IMR-90 (cell line): ENCODE measurements at regions of chr7 and their contacts with region 1.

Region 1: DNA sequence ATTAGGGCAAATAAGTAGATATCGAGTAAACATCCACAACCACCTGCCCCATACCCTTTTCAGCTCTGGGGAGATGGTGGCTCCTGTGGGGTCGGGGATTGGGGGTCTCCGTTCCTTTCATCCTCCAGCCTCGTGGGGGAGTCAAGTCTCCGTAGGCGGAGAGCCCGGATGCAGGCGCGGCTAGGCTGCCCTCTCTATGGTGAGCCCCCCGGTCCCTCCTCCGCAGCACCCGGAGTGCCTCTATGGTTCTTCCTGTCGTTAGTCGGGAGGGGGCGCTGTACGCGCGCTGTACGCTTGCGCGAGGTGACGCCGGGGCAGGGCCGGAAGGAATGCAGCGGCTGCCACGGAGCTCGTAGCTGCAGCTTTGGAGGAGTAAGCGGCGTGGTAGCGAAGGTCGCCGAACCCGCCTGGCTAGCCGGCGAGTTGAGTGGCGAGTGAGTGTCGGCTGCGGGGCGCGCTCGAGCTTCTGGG is 14.8 kb upstream of the MMD2 start:
- DNase-seq: peak; percentile 89
- ATAC-seq: peak; percentile 98
- H3K4me3 ChIP-seq: peak overlapping the region; percentile 73
- H3K27ac ChIP-seq: peak overlapping the region; percentile 81
- H3K4me1 ChIP-seq: no peaks in the 10 kb centered on the region
- H3K27me3 ChIP-seq: no peaks in the 10 kb centered on the region; the same call in 1 of the 2 replicates
- CTCF ChIP-seq: peak; percentile 92
- POLR2A ChIP-seq: peak; percentile 75
- RAD21 ChIP-seq: peak; percentile 47

Region 2: DNA sequence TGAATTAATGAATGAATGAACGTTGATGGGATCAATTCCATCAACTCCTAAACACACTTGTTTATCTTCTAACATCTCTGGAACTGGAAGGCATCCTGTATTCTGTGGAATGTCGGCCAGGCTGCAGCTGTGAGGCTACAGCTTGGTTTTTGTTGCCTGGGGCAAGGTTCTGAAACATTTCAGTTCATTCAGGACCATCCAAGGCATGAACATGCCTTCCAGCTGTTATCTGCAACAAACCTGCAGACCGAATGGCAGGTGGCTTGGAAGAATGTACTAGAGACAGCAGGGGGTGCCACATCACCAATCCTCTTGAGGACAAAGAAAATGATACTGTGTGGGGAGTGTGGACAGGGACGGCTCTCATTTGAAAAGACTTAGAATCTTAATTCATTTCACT is 124.4 kb before region 1 on chr7:
- CTCF ChIA-PET with region 1: interaction called, 3 read pairs
- POLR2A ChIA-PET with region 1: no interaction called
- dilution Hi-C with region 1: no loop called
- in situ Hi-C with region 1: no loop called
- intact Hi-C with region 1: loop called (anchors 5 kb)
- DNase-seq: peak; percentile 26
- ATAC-seq: peak; percentile 42
- H3K4me3 ChIP-seq: no peak overlapping the region
- H3K27ac ChIP-seq: no peak overlapping the region
- H3K4me1 ChIP-seq: peaks cover 2% of the 10 kb centered on the region; the same call in 1 of the 2 replicates
- H3K27me3 ChIP-seq: no peaks in the 10 kb centered on the region; the same call in 1 of the 2 replicates
- CTCF ChIP-seq: peak; percentile 24; the same call in 1 of the 2 replicates
- POLR2A ChIP-seq: no peak
- RAD21 ChIP-seq: peak; percentile 29

Region 3: DNA sequence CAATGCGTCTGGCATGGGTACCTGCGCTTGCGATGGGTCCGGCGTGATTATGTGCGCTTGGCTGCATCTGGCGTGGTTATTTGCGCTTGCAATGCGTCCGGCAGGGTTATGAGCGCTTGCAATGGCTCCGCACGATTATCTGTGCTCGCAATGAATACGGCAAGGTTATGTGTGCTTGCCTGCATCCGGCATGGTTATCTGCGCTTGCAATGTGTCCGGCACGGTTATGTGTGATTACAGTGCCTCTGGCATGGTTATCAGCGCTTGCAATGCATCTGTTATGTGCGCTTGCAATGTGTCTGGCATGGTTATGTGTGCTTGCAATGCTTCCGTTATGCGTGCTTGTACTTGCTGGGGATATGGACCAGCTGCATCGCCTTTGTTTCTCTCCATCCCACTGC is 109.5 kb after region 1 on chr7:
- CTCF ChIA-PET with region 1: no interaction called
- POLR2A ChIA-PET with region 1: no interaction called
- dilution Hi-C with region 1: no loop called
- in situ Hi-C with region 1: no loop called
- intact Hi-C with region 1: loop called (anchors 1 kb)
- DNase-seq: no peak
- ATAC-seq: no peak
- H3K4me3 ChIP-seq: no peak overlapping the region
- H3K27ac ChIP-seq: no peak overlapping the region
- H3K4me1 ChIP-seq: no peaks in the 10 kb centered on the region
- H3K27me3 ChIP-seq: peaks cover 7% of the 10 kb centered on the region; the same call in 1 of the 2 replicates
- CTCF ChIP-seq: no peak
- POLR2A ChIP-seq: no peak
- RAD21 ChIP-seq: no peak

Region 4: GRCh38 chr7:5237286-5237685 is 263.5 kb after region 1 on chr7:
- CTCF ChIA-PET with region 1: no interaction called
- POLR2A ChIA-PET with region 1: no interaction called
- dilution Hi-C with region 1: no loop called
- in situ Hi-C with region 1: no loop called
- intact Hi-C with region 1: no loop called
- DNase-seq: peak; percentile 40
- ATAC-seq: peak; percentile 21
- H3K4me3 ChIP-seq: no peak overlapping the region
- H3K27ac ChIP-seq: no peak overlapping the region
- H3K4me1 ChIP-seq: peaks cover 4% of the 10 kb centered on the region
- H3K27me3 ChIP-seq: no peaks in the 10 kb centered on the region; the same call in 1 of the 2 replicates
- CTCF ChIP-seq: no peak
- POLR2A ChIP-seq: no peak
- RAD21 ChIP-seq: no peak

Region 5: GRCh38 chr7:5296611-5297226 is 323.0 kb after region 1 on chr7:
- CTCF ChIA-PET with region 1: no interaction called
- POLR2A ChIA-PET with region 1: no interaction called
- dilution Hi-C with region 1: no loop called
- in situ Hi-C with region 1: no loop called
- intact Hi-C with region 1: no loop called
- DNase-seq: no peak
- ATAC-seq: peak; percentile 21
- H3K4me3 ChIP-seq: no peak overlapping the region
- H3K27ac ChIP-seq: no peak overlapping the region
- H3K4me1 ChIP-seq: no peaks in the 10 kb centered on the region
- H3K27me3 ChIP-seq: no peaks in the 10 kb centered on the region
- CTCF ChIP-seq: no peak
- POLR2A ChIP-seq: no peak
- RAD21 ChIP-seq: no peak